PC-9 (cell line): ENCODE measurements at regions of chr1 and their contacts with region 1.

Region 1: DNA sequence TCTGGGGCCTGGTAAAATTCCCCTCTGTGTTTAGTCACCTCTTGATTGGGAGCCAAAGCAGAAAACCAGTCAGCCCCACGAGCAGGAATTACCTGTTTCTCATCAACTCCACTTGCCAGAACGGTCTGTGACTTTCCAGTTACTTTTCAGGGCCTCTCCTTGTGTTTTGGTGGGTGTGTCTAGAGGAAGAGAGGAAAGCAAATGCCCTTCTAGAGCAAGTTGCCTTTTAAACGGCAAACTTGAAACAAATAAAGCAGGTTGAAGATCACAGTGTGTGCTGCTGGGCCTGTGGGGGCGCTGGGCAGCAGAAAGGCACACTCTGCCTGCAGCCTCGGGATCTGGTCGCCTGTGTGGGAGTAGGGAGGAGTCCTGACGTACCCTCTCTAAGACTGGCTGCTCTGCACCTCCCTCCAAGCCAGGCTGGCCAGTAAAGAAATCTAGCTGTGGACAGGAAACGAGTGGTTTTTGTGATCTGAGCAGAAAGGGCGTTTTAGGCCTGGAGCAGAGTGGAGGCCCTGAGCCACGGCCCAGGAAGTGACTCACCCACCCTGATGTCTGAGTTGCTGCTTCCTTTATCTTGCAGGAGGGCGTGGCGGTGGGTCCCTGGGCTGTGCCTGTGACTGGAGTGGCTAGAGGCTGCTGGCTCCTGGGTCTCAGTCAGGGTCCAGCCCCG is 11.1 kb upstream of the S100A11 start:
- DNase-seq: peak; percentile 94 to 96
- H3K4me3 ChIP-seq: peak overlapping the region; percentile 52; the same call in 1 of the 2 replicates
- H3K27ac ChIP-seq: peak overlapping the region; percentile 99
- H3K4me1 ChIP-seq: peaks cover 72% of the 10 kb centered on the region
- H3K27me3 ChIP-seq: no peaks in the 10 kb centered on the region
- CTCF ChIP-seq: peak; percentile 51; the same call in 1 of the 2 replicates

Region 2: DNA sequence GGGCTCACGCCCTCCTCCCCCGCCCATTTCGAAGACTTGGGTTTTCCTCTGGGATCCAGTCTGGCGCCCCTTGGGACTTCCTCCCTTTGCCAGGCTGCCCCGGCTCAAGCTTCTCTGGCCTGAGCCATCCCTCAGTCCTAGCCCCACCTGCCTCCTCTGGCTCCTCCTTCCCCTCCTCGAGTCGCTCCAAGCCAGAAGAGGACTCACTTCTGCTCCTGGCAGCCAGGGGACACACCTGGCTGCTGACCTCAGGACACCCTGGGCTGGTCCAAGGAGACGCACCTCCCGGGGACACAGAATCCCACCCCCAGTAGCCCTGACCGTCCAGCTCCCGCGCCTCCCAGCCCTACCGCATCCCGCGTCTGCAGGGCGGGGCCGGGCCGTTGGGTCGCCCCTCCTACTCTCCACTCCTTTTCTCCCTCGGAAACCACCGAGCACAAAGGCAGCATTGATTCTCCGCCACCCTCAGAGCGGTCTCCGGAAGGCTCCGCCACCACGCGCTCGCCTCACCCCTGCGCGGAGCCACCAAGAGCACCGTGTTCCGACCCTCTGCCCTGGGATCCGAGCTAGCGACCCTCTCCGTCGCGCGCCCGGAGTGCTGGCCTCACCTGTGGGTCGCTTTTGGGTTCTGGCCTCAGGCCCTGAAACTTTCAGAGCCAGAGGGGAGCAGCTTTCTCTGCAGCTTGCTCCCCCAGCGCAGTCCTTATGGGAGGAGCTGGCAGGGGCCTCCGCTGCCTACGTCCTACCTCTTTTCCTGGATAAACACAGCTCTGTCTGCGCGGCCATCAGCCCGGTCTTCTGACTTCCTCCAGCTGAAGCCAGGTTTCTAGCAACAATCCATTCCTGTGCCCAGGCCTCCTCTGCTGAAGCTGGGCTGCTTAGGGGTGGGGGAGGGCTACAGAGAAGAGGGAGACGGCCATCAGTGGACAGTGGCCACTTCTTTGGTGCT is 208.1 kb before region 1 on chr1 and contains the start of gene C2CD4D:
- CTCF ChIA-PET with region 1: interaction called, 5 read pairs
- POLR2A ChIA-PET with region 1: no interaction called
- intact Hi-C with region 1: loop called (anchors 5 kb)
- DNase-seq: peak; percentile 86 to 93
- H3K4me3 ChIP-seq: peak within 1 kb of the TSS; percentile 57
- H3K27ac ChIP-seq: peak within 1 kb of the TSS; percentile 86
- H3K4me1 ChIP-seq: peaks cover 35% of the 10 kb centered on the region
- H3K27me3 ChIP-seq: no peaks in the 10 kb centered on the region
- CTCF ChIP-seq: no peak
- total RNA-seq, gene C2CD4D: 1.4 and 1.5 TPM in 2 replicates

Region 3: GRCh38 chr1:151909150-151910149 is 138.4 kb before region 1 on chr1 and contains the start of gene THEM4:
- CTCF ChIA-PET with region 1: interaction called, 5 read pairs
- POLR2A ChIA-PET with region 1: no interaction called
- intact Hi-C with region 1: loop called (anchors 5 kb)
- DNase-seq: peak; percentile 87 to 98
- H3K4me3 ChIP-seq: peak within 1 kb of the TSS; percentile 78
- H3K27ac ChIP-seq: peak within 1 kb of the TSS; percentile 84
- H3K4me1 ChIP-seq: peaks cover 30% of the 10 kb centered on the region
- H3K27me3 ChIP-seq: no peaks in the 10 kb centered on the region
- CTCF ChIP-seq: no peak
- total RNA-seq, gene THEM4: 24.1 and 41.4 TPM in 2 replicates

Region 4: GRCh38 chr1:151968058-151968457 is 79.8 kb before region 1 on chr1:
- CTCF ChIA-PET with region 1: interaction called, 17 read pairs
- POLR2A ChIA-PET with region 1: no interaction called
- intact Hi-C with region 1: no loop called
- DNase-seq: peak in 1 of 2 experiments; percentile 51
- H3K4me3 ChIP-seq: no peak overlapping the region
- H3K27ac ChIP-seq: no peak overlapping the region
- H3K4me1 ChIP-seq: peaks cover 60% of the 10 kb centered on the region
- H3K27me3 ChIP-seq: no peaks in the 10 kb centered on the region
- CTCF ChIP-seq: peak; percentile 70

Region 5: GRCh38 chr1:152013664-152014237 is 34.1 kb before region 1 on chr1:
- CTCF ChIA-PET with region 1: interaction called, 12 read pairs
- POLR2A ChIA-PET with region 1: no interaction called
- intact Hi-C with region 1: no loop called
- DNase-seq: no peak
- H3K4me3 ChIP-seq: no peak overlapping the region
- H3K27ac ChIP-seq: no peak overlapping the region
- H3K4me1 ChIP-seq: peaks cover 13% of the 10 kb centered on the region; the same call in 1 of the 2 replicates
- H3K27me3 ChIP-seq: no peaks in the 10 kb centered on the region
- CTCF ChIP-seq: peak; percentile 74

Region 6: GRCh38 chr1:152141974-152142584 is 94.2 kb after region 1 on chr1:
- CTCF ChIA-PET with region 1: no interaction called
- POLR2A ChIA-PET with region 1: no interaction called
- intact Hi-C with region 1: loop called (anchors 1 kb)
- DNase-seq: peak; percentile 64 to 66
- H3K4me3 ChIP-seq: no peak overlapping the region
- H3K27ac ChIP-seq: no peak overlapping the region
- H3K4me1 ChIP-seq: no peaks in the 10 kb centered on the region
- H3K27me3 ChIP-seq: peaks cover 3% of the 10 kb centered on the region; the same call in 1 of the 2 replicates
- CTCF ChIP-seq: peak; percentile 92

Region 7: DNA sequence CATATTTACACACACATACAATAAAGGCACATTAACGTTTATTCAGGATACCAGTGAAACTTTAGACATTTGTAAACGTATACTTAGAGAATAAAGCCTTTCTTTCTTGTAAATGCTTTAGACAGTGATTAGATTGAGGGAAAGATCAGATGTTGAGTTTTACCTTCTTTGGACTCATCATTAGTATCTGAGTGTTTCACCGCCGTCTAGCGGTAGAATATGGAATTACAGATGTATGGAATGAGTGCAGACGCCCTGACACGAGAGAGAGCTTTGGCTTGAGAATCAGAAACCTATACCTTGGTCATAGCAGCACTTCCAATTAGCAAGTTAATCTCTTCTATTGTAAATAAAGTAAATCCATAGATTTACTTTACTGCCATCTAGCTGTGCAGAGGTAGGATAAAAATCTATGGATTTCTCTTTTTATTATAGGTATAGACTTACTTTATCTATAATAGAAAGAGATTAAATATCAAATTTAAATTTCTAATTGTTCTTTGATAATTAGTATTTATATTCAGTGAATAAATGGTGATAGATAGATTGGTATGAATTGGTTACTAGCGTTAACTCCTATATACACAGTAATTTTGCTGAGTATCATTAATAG is 299.4 kb after region 1 on chr1:
- CTCF ChIA-PET with region 1: no interaction called
- POLR2A ChIA-PET with region 1: no interaction called
- intact Hi-C with region 1: loop called (anchors 5 kb)
- DNase-seq: peak; percentile 33 to 46
- H3K4me3 ChIP-seq: no peak overlapping the region
- H3K27ac ChIP-seq: no peak overlapping the region
- H3K4me1 ChIP-seq: no peaks in the 10 kb centered on the region
- H3K27me3 ChIP-seq: no peaks in the 10 kb centered on the region
- CTCF ChIP-seq: peak; percentile 92